ENCODE measurements at regions of chr19 and their contacts with region 1.

Region 1: GRCh38 chr19:40529093-40529954 is 47.3 kb upstream of the SHKBP1 start:
- H3K4me3 ChIP-seq: peak overlapping the region; percentile 19
- H3K27ac ChIP-seq: peak overlapping the region; percentile 39
- H3K4me1 ChIP-seq: peaks cover 17% of the 10 kb centered on the region
- CTCF ChIP-seq: peak; percentile 100

Region 2: DNA sequence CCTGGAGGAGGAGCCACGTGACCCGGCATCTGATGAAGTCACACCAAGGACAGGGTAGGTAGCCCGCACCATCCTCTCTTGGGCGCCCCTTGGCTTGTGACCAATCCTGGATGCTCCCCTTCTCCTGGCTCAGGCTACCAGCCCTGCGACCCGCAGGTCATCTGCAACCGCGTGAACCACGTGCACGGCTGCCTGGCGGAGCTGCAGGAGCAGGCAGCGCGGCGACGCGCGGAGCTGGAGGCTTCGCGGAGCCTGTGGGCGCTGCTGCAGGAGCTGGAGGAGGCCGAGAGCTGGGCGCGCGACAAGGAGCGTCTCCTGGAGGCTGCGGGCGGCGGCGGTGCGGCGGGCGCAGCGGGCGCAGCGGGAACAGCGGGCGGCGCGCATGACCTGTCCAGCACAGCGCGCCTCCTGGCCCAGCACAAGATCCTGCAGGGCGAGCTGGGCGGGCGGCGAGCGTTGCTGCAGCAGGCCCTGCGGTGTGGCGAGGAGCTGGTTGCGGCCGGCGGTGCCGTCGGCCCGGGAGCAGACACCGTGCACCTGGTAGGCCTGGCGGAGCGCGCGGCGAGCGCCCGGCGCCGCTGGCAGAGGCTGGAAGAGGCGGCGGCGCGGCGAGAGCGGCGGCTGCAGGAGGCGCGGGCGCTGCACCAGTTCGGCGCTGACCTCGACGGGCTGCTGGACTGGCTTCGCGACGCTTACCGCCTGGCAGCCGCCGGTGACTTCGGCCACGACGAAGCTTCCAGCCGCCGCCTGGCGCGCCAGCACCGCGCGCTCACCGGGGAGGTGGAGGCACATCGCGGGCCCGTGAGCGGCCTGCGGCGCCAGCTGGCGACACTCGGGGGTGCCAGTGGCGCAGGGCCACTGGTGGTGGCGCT is 16.6 kb before region 1 on chr19:
- CTCF ChIA-PET with region 1: interaction called, 15 read pairs
- POLR2A ChIA-PET with region 1: interaction called, 3 read pairs
- H3K4me3 ChIP-seq: no peak overlapping the region
- H3K27ac ChIP-seq: no peak overlapping the region
- H3K4me1 ChIP-seq: no peaks in the 10 kb centered on the region
- CTCF ChIP-seq: no peak

Region 3: GRCh38 chr19:40553885-40554857 is 24.8 kb after region 1 on chr19:
- CTCF ChIA-PET with region 1: interaction called, 259 read pairs
- POLR2A ChIA-PET with region 1: interaction called, 3 read pairs
- H3K4me3 ChIP-seq: no peak overlapping the region
- H3K27ac ChIP-seq: no peak overlapping the region
- H3K4me1 ChIP-seq: peaks cover 7% of the 10 kb centered on the region
- CTCF ChIP-seq: no peak